HepG2 (cell line): ENCODE measurements at regions of chr5 and their contacts with region 1.

Region 1: DNA sequence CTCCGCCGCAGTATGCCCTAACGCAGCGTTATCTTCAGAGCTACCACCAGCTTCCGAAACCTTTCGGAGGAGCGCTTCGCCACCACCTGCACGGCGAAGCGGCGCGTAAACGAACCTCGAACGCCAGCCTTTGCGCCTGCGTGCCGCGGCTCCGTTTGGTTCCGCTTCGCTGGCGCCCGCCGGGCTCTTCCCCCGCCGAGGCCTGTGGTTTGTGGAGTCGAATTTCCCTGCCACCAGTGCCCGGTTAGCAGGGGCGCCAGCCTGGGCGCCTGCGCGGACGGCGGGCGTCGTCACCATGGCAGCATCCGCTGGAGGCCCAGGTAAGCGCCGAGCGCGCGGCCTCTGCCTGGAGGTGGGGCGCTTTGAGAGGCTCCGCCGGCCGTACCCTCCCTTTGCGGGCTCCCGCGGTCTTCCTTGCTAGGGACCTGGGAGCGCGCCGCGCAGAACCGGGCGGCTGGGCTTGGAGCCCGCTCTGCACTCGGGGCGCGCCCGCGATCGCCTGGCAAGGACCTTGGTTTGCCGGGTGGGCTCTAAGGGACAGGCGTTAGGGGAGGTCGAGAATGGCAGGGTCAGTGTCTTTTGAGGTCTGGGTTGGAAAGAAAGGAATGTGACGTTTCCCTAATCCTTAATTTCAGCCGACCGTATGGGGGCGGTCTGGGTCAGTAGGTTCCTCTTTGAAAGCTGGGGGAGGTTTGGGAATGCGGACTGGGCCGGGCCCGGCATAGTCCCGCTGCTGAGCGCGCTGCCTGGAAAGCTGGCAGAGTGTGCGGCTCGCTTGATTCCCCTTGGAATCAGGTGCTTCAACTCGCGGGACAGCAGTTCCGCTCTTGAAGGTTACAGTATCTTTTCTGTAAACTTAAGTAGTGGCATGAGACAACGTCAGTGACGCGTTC is at the start of gene FAM151B:
- DNase-seq: peak; percentile 92
- ATAC-seq: peak; percentile 95
- H3K4me3 ChIP-seq: peak within 1 kb of the TSS; percentile 58 to 81 (median 75)
- H3K27ac ChIP-seq: peak within 1 kb of the TSS; percentile 80
- H3K4me1 ChIP-seq: peaks cover 38% of the 10 kb centered on the region
- H3K27me3 ChIP-seq: no peaks in the 10 kb centered on the region; a peak in 1 of 5 replicates
- CTCF ChIP-seq: peak; percentile 69
- EP300 ChIP-seq: no peak
- POLR2A ChIP-seq: peak; percentile 71 to 82
- RAD21 ChIP-seq: no peak; the same call in 1 of the 2 replicates
- total RNA-seq, gene FAM151B: 1.0 and 2.3 TPM in 2 replicates

Region 2: GRCh38 chr5:80346055-80346454 is 142.0 kb before region 1 on chr5:
- CTCF ChIA-PET with region 1: no interaction called
- POLR2A ChIA-PET with region 1: no interaction called
- in situ Hi-C with region 1: no loop called
- intact Hi-C with region 1: loop called (anchors 5 kb)
- DNase-seq: peak; percentile 44
- ATAC-seq: peak; percentile 90
- H3K4me3 ChIP-seq: no peak overlapping the region
- H3K27ac ChIP-seq: no peak overlapping the region
- H3K4me1 ChIP-seq: peaks cover 11% of the 10 kb centered on the region
- H3K27me3 ChIP-seq: peaks cover 0 to 2% of the 10 kb centered on the region in 2 experiments; a peak in 1 of 5 replicates
- CTCF ChIP-seq: peak; percentile 70
- EP300 ChIP-seq: no peak
- POLR2A ChIP-seq: no peak
- RAD21 ChIP-seq: peak; percentile 11; the same call in 1 of the 2 replicates

Region 3: DNA sequence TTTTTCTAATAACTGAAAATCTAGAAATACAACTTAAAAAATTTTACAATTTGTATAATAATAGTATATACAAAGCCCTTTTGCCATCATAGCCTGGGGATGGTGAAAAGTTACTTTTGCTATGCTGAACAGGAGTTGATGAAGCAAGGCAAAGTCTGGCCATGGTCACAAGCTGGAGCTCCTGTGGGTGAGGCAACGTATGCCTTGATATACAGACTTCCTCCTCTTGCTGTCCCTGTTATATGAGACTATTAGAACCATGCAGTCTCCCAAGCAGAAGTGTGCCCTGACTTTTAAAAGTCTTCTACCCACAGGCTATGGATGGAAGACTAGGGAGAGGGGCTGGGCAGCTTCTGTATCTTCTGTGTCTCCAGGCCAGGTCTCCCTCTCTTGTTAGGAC is 15.6 kb after region 1 on chr5:
- CTCF ChIA-PET with region 1: no interaction called
- POLR2A ChIA-PET with region 1: no interaction called
- in situ Hi-C with region 1: no loop called
- intact Hi-C with region 1: no loop called
- DNase-seq: no peak
- ATAC-seq: no peak
- H3K4me3 ChIP-seq: no peak overlapping the region
- H3K27ac ChIP-seq: no peak overlapping the region
- H3K4me1 ChIP-seq: no peaks in the 10 kb centered on the region
- H3K27me3 ChIP-seq: no peaks in the 10 kb centered on the region
- CTCF ChIP-seq: no peak
- EP300 ChIP-seq: no peak
- POLR2A ChIP-seq: no peak
- RAD21 ChIP-seq: no peak

Region 4: GRCh38 chr5:80672140-80672736 is 184.2 kb after region 1 on chr5:
- CTCF ChIA-PET with region 1: interaction called, 6 read pairs
- POLR2A ChIA-PET with region 1: interaction called, 3 read pairs
- in situ Hi-C with region 1: loop called (anchors 5 kb)
- intact Hi-C with region 1: loop called (anchors 1 kb)
- DNase-seq: peak; percentile 76
- ATAC-seq: peak; percentile 80
- H3K4me3 ChIP-seq: no peak overlapping the region
- H3K27ac ChIP-seq: no peak overlapping the region
- H3K4me1 ChIP-seq: peaks cover 17% of the 10 kb centered on the region
- H3K27me3 ChIP-seq: no peaks in the 10 kb centered on the region
- CTCF ChIP-seq: peak; percentile 82
- EP300 ChIP-seq: no peak
- POLR2A ChIP-seq: no peak
- RAD21 ChIP-seq: peak; percentile 47; the same call in 1 of the 2 replicates